Transverse colon (tissue), 4 donors: ENCODE measurements at regions of chr17 and their contacts with region 1.

Region 1: DNA sequence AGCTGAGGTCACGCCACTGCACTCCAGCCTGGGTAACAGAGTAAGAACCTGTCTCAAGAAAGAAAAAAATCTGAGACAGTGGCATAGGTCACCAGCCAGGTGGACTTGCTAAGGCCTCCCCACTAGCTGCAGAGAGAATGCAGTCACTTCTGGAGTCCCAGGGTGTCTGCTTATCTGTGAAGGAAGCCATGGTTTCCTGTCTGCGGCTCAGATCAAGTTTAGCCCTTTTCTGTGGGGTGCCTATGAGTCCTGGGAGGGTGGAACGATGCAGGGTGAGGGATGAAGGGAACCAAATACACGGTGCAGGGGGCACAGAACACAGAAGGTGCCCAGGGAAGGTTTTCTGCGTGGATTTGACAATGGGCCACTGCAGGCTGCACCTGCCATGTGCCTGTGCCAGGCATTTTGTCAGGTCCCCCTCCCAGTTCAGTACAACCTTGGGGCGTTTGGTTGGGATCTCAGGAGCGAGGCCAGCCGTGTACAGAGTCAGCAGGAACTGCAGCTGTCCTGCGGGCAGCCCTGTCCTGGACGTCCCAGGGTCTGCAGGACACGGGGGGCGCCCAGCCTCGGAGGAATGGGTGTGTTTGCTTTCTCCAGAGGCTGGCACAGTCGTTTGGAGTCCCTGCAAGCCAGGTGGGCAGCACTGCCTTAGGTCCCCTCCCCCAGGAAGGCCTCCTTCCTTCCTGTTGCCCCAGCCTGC is 41.8 kb downstream of the RAB11FIP4 start:
- DNase-seq: no peak
- H3K4me3 ChIP-seq: no peak overlapping the region
- H3K27ac ChIP-seq: no peak overlapping the region
- H3K4me1 ChIP-seq: peaks cover 0 to 7% (median 3%) of the 10 kb centered on the region in 4 donors
- H3K27me3 ChIP-seq: peaks cover 4% of the 10 kb centered on the region
- CTCF ChIP-seq: no peak
- EP300 ChIP-seq: no peak
- POLR2A ChIP-seq: no peak

Region 2: GRCh38 chr17:31339906-31340661 is 93.2 kb before region 1 on chr17:
- in situ Hi-C with region 1: no loop called
- intact Hi-C with region 1: no loop called
- DNase-seq: no peak
- H3K4me3 ChIP-seq: no peak overlapping the region
- H3K27ac ChIP-seq: no peak overlapping the region
- H3K4me1 ChIP-seq: no peaks in the 10 kb centered on the region
- H3K27me3 ChIP-seq: no peaks in the 10 kb centered on the region
- CTCF ChIP-seq: no peak
- EP300 ChIP-seq: no peak
- POLR2A ChIP-seq: no peak

Region 3: DNA sequence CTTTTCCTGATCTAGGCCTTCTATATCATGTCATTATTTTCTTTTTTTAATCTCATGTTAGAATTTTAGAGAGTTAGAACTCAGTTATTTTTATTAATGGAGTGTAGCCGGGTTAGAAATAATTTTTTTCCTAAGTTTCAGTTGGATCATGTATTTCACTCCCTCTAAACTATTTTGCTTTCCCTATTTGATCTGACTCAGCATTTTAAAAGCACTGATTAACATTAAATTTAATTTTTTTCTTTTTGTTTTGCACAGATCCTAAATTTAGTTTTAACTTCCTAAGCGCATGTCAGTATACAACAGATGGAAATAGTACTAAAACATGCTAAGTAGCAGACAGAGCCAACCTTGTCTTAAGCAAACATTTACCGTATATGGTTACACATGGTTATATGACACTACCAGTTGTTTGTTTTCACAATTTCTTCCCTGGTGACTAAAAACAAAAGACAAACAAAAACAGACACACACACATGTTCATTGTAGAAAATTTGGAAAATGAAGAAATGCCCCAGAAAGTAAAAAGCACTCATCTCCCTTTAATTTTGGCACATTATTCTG is 75.3 kb before region 1 on chr17:
- in situ Hi-C with region 1: no loop called
- intact Hi-C with region 1: no loop called
- DNase-seq: no peak
- H3K4me3 ChIP-seq: no peak overlapping the region
- H3K27ac ChIP-seq: no peak overlapping the region
- H3K4me1 ChIP-seq: no peaks in the 10 kb centered on the region
- H3K27me3 ChIP-seq: no peaks in the 10 kb centered on the region
- CTCF ChIP-seq: no peak
- EP300 ChIP-seq: no peak
- POLR2A ChIP-seq: no peak

Region 4: GRCh38 chr17:31385428-31386285 is 47.6 kb before region 1 on chr17:
- in situ Hi-C with region 1: no loop called
- intact Hi-C with region 1: loop called (anchors 2 kb)
- DNase-seq: no peak
- H3K4me3 ChIP-seq: no peak overlapping the region
- H3K27ac ChIP-seq: no peak overlapping the region
- H3K4me1 ChIP-seq: no peaks in the 10 kb centered on the region
- H3K27me3 ChIP-seq: peaks cover 25% of the 10 kb centered on the region
- CTCF ChIP-seq: no peak
- EP300 ChIP-seq: no peak
- POLR2A ChIP-seq: no peak

Region 5: DNA sequence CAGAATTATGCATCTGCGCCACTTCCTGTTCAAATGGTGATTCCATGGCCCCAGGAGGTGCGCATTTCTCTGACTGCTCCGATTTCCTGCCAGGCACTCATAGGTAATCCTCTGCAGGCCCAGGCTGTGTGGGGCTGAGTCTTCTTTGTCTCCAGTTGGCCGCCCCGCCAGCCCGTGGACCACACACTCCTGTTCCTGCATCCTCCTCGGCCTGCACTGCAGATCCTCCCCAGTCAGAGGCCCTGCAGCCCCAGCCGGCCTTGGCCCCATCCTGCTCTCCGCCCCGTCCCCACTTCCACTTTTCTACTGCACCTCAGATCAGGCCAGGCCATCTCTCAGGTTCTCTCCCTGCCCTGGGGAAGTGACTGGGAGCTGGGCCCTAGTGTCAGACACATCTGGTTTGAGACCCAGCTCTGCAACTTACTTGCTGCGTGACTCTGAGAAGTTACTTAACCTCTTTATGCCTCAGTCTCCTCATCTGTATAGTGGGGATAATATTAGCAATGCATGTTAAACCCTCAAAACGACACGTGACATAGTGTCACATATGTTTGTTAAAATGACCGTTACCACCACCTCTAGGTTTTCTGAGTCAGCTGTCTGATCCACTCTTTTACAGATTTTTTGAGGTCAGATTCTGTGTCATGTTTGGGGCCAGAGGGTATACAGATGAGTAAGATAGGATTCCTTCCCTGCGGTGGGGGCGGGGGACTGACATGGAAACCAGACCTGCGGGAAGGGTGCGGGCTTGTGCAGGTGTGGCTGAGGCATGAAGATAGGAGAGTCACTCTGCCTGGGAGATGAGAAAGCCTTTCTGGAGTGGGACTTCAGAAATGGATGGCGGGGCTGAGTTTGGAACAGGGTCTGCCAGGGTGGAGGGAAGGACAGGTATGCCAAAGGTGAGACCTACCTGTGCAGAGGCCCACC is 28.9 kb before region 1 on chr17:
- in situ Hi-C with region 1: no loop called
- intact Hi-C with region 1: no loop called
- DNase-seq: no peak
- H3K4me3 ChIP-seq: no peak overlapping the region
- H3K27ac ChIP-seq: no peak overlapping the region
- H3K4me1 ChIP-seq: no peaks in the 10 kb centered on the region
- H3K27me3 ChIP-seq: peaks cover 6% of the 10 kb centered on the region
- CTCF ChIP-seq: no peak
- EP300 ChIP-seq: no peak
- POLR2A ChIP-seq: no peak

Region 6: GRCh38 chr17:31524926-31525800 is 91.9 kb after region 1 on chr17:
- in situ Hi-C with region 1: loop called in 1 of 4 experiments (anchors 5 kb)
- intact Hi-C with region 1: loop called (anchors 5 kb)
- DNase-seq: peak; percentile 91
- H3K4me3 ChIP-seq: no peak overlapping the region
- H3K27ac ChIP-seq: no peak overlapping the region
- H3K4me1 ChIP-seq: no peaks in the 10 kb centered on the region
- H3K27me3 ChIP-seq: no peaks in the 10 kb centered on the region
- CTCF ChIP-seq: peak; percentile 84 to 93 (median 92)
- EP300 ChIP-seq: no peak
- POLR2A ChIP-seq: no peak

Region 7: GRCh38 chr17:31858642-31859473 is 425.6 kb after region 1 on chr17 and contains the start of gene COPRS:
- in situ Hi-C with region 1: no loop called
- intact Hi-C with region 1: loop called (anchors 5 kb)
- DNase-seq: peak; percentile 91
- H3K4me3 ChIP-seq: peak within 1 kb of the TSS; percentile 27 to 90 (median 78)
- H3K27ac ChIP-seq: peak within 1 kb of the TSS; percentile 80 to 92 (median 86)
- H3K4me1 ChIP-seq: peaks cover 6 to 24% (median 17%) of the 10 kb centered on the region in 4 donors
- H3K27me3 ChIP-seq: no peaks in the 10 kb centered on the region
- CTCF ChIP-seq: no peak
- EP300 ChIP-seq: no peak
- POLR2A ChIP-seq: no peak
- total RNA-seq, gene COPRS: 19.8 to 43.8 (median 38.2) TPM